ENCODE measurements at regions of chr22 and their contacts with region 1.

Region 1: DNA sequence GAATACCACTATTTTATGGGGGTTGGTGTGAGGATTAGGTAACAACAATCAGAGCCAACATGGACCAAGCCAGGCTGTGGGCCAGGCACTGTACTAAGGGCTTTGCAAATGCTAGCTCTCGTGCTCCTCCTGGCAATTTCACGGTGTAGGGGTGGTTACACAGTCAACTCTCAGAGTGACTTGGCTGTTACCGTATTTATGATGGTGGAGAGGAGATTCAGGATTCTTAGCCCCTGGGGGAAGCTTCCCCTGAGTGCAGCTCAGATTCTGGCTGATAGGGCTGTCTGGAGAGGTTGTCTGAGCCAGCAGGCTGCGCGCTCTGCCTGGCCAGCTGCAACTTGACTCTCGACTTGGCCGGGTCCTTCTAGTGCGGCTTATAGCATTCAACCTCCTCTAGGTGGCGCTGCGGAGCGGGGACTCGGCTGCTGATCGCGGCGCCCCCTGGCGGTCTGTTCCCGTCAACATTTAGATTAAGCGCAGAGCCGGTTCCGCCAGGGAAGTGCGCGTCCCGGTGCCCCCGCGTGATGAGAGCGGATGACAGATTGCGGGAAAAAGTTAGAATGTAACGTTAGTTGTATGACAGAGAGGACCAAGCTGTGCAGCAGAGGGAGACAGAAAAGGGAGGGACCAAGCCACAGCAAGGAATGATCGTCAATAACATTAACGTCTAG is 4.5 kb upstream of the NCF4 start:
- DNase-seq: peak; percentile 12
- H3K4me3 ChIP-seq: no peak overlapping the region
- H3K27me3 ChIP-seq: peaks cover 10% of the 10 kb centered on the region
- CTCF ChIP-seq: peak; percentile 100

Region 2: DNA sequence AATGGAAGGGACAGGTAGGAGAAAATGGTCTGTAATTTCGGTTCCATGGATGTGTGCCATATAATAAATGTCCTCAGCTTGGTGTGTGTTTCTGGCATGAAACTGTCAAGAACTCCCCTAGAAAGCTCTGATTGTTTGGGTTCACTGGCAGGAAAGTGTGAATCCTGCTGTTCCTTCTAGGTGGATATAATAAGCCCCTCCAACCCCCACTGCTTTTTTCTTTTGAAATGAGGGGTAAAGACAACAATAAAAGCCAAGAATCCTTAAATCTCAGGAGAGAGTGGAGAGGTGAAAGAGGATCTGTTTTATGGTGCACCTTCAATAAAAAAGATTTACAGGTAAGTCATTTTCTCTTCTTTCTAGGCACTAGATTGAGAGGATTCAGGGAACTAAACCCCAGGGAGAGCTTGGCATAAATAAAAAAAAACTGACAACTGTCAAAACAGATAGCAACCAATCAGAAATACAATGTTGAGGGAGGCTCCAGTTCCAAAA is 227.6 kb before region 1 on chr22:
- CTCF ChIA-PET with region 1: no interaction called
- POLR2A ChIA-PET with region 1: no interaction called
- DNase-seq: no peak
- H3K4me3 ChIP-seq: no peak overlapping the region
- H3K27me3 ChIP-seq: peaks cover 6% of the 10 kb centered on the region
- CTCF ChIP-seq: no peak

Region 3: GRCh38 chr22:36775964-36776669 is 80.1 kb before region 1 on chr22 and contains the start of gene IFT27:
- CTCF ChIA-PET with region 1: interaction called, 89 read pairs
- POLR2A ChIA-PET with region 1: no interaction called
- DNase-seq: peak; percentile 100
- H3K4me3 ChIP-seq: peak within 1 kb of the TSS; percentile 81
- H3K27me3 ChIP-seq: no peaks in the 10 kb centered on the region
- CTCF ChIP-seq: no peak
- polyA plus RNA-seq, gene IFT27: 20.6 and 23.0 TPM in 2 replicates

Region 4: GRCh38 chr22:36816636-36817524 is 39.4 kb before region 1 on chr22 and contains the start of gene PVALB:
- CTCF ChIA-PET with region 1: interaction called, 10 read pairs
- POLR2A ChIA-PET with region 1: no interaction called
- DNase-seq: no peak
- H3K4me3 ChIP-seq: no peak within 1 kb of the TSS
- H3K27me3 ChIP-seq: peaks cover 61% of the 10 kb centered on the region
- CTCF ChIP-seq: no peak
- polyA plus RNA-seq, gene PVALB: not detected in 2 replicates

Region 5: DNA sequence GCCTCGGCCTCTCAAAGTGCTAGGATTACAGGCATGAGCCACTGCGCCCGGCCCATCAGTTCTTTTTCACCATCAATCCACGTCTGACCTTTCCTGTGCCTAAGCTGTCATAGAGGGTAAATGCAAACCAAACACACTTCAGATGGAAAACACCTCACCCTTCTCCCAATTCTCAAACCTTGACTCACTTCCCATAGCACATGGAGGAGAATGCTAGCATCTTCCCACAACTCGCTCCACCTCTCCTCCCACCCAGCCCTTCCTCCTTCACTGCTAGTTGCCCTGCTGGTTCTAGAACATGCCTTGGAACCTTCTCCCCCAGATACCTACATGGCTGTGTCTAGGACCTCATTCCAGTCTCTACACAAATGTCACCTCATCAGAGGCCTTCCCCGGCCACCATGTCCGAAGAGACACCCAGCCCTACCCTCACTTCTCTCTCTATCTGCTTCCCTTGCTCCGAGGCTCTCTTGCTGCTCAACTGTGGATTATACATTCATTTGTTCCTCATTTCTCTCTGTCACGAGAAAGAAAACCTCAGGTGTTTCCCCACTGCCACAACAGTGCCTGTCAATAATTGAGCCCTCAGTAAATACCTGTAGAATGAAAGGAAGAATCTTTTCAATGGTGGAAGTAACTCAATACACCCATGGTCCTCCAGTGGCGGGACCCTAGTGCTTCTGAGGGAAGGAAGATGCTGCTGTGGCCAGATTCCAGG is 16.7 kb before region 1 on chr22:
- CTCF ChIA-PET with region 1: interaction called, 58 read pairs
- POLR2A ChIA-PET with region 1: no interaction called
- DNase-seq: no peak
- H3K4me3 ChIP-seq: no peak overlapping the region
- H3K27me3 ChIP-seq: no peaks in the 10 kb centered on the region; the same call in 1 of the 2 replicates
- CTCF ChIP-seq: no peak

Region 6: GRCh38 chr22:36966851-36967540 is 110.7 kb after region 1 on chr22:
- CTCF ChIA-PET with region 1: interaction called, 11 read pairs
- POLR2A ChIA-PET with region 1: no interaction called
- DNase-seq: no peak
- H3K4me3 ChIP-seq: no peak overlapping the region
- H3K27me3 ChIP-seq: peaks cover 3% of the 10 kb centered on the region
- CTCF ChIP-seq: no peak

Region 7: DNA sequence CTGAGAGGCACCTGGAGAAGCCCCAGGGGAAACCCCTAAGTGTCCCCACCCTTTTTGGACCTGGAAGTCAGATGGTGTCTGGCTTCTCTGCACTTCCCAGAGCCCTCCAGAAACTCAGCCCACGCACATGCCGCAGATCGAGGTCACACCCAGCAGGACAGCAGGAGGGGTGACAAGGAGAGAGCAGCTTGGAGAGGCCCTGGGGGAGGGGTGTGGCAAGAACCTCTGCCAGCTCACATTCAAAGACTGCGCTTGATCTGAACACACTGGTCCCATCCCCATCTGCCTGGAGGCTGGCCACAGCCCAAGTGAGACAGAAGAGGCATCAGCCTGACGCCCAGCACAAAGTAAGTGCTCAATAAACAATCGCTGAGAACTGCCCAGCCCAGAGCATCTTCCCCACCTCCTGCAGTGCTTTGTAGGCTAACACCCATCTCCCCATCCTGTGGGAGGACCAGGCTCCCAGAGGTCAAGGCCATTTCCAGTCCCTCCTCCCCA is 231.9 kb after region 1 on chr22:
- CTCF ChIA-PET with region 1: no interaction called
- POLR2A ChIA-PET with region 1: no interaction called
- DNase-seq: peak; percentile 24
- H3K4me3 ChIP-seq: no peak overlapping the region
- H3K27me3 ChIP-seq: peaks cover 3% of the 10 kb centered on the region; the same call in 1 of the 2 replicates
- CTCF ChIP-seq: no peak